Activated CD8-positive, alpha-beta T cell treated with anti-CD3 and anti-CD28 coated beads for 36 hours (primary cell): ENCODE measurements at regions of chr1 and their contacts with region 1.

Region 1: GRCh38 chr1:7948960-7949359 is 8.3 kb upstream of the TNFRSF9 start:
- DNase-seq: peak; percentile 61
- ATAC-seq: peak; percentile 75
- H3K4me3 Mint-ChIP-seq: peak overlapping the region; percentile 51
- H3K27ac Mint-ChIP-seq: peak overlapping the region; percentile 90
- H3K4me1 Mint-ChIP-seq: peaks cover 54% of the 10 kb centered on the region
- H3K27me3 Mint-ChIP-seq: no peaks in the 10 kb centered on the region
- CTCF ChIP-seq: no peak

Region 2: GRCh38 chr1:7893529-7894180 is 55.3 kb before region 1 on chr1:
- CTCF ChIA-PET with region 1: no interaction called
- POLR2A ChIA-PET with region 1: no interaction called
- intact Hi-C with region 1: no loop called
- DNase-seq: no peak
- ATAC-seq: no peak
- H3K4me3 Mint-ChIP-seq: no peak overlapping the region
- H3K27ac Mint-ChIP-seq: no peak overlapping the region
- H3K4me1 Mint-ChIP-seq: peaks cover 3% of the 10 kb centered on the region
- H3K27me3 Mint-ChIP-seq: no peaks in the 10 kb centered on the region
- CTCF ChIP-seq: no peak

Region 3: DNA sequence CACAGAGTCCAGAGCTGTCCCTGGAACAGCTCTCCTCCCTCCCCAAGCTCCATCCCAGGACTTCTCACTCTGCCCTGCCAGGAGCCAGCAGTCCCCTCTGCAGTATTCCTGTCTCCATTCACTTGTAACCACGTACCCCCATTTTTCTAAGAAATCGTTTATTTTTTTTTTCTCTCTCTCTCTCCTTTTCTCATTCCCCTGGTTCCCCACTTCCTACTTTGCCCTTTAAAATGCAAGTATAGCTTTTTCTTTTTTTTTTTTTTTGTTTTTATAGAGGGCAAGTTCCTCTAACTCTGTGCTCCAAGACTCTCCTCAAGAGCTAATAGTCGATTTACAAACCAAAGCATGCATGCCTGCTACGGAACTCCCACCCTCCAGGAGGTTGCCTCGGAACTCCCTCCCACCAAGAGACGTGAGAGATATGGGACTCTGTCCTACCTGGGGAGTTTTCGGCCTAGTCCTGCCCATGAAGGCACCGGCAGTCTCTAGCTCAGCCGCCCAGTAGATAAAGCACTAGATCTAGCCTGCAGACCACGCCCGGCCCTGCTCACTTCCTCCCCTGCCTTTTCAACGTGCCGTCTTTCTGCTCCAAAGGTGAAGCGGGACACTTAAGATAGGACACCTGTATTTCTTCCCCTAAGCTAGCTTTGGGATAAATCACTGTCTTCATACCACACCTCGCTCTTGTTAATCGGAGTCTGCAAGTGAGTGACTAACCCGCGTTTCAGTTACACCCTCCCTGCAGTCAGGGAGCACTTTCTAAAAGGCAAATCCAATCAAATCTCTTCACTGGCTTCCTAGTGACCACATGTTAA is 36.0 kb before region 1 on chr1:
- CTCF ChIA-PET with region 1: interaction called, 6 read pairs
- POLR2A ChIA-PET with region 1: interaction called, 65 read pairs
- intact Hi-C with region 1: loop called (anchors 5 kb)
- DNase-seq: no peak
- ATAC-seq: peak; percentile 17
- H3K4me3 Mint-ChIP-seq: peak overlapping the region; percentile 56
- H3K27ac Mint-ChIP-seq: peak overlapping the region; percentile 66
- H3K4me1 Mint-ChIP-seq: peaks cover 42% of the 10 kb centered on the region
- H3K27me3 Mint-ChIP-seq: no peaks in the 10 kb centered on the region
- CTCF ChIP-seq: no peak

Region 4: DNA sequence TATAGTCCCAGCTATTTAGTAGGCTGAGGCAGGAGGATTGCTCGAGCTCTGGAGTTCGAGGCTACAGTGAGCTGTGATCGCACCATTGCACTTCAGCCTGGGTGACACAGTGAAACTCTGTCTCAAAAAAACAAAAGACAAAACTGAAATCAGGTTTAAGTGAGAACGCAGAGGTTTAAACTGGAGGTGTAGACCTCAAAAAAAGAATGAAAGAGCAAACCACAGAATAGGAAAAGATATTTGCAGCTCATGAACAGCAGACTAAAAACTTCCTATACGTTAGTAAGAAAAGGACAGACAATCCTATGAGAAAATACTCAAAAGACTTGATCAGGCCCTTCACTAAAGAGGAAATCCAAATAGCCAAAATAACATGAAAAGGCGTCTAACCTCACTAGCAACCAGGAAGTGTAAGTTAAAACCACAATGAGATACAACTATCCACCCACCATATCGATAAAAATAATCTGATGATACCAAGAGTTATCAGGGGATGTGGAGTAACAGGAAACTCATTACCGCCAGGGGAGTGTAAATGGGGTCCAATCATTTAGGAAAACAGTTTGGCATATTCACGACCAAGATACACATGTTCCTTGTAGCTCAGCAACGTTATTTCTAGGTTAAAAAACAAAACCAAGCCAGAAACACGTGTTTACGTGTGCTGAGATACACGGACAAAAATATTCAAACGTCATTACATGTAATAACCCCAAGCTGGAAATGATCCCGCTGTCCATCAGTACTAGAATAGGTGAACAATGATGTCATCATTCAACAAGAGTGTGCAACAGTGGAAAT is 18.1 kb before region 1 on chr1:
- CTCF ChIA-PET with region 1: interaction called, 5 read pairs
- POLR2A ChIA-PET with region 1: interaction called, 65 read pairs
- intact Hi-C with region 1: no loop called
- DNase-seq: peak; percentile 57
- ATAC-seq: peak; percentile 73
- H3K4me3 Mint-ChIP-seq: peak overlapping the region; percentile 55
- H3K27ac Mint-ChIP-seq: peak overlapping the region; percentile 93
- H3K4me1 Mint-ChIP-seq: peaks cover 79% of the 10 kb centered on the region
- H3K27me3 Mint-ChIP-seq: no peaks in the 10 kb centered on the region
- CTCF ChIP-seq: no peak

Region 5: DNA sequence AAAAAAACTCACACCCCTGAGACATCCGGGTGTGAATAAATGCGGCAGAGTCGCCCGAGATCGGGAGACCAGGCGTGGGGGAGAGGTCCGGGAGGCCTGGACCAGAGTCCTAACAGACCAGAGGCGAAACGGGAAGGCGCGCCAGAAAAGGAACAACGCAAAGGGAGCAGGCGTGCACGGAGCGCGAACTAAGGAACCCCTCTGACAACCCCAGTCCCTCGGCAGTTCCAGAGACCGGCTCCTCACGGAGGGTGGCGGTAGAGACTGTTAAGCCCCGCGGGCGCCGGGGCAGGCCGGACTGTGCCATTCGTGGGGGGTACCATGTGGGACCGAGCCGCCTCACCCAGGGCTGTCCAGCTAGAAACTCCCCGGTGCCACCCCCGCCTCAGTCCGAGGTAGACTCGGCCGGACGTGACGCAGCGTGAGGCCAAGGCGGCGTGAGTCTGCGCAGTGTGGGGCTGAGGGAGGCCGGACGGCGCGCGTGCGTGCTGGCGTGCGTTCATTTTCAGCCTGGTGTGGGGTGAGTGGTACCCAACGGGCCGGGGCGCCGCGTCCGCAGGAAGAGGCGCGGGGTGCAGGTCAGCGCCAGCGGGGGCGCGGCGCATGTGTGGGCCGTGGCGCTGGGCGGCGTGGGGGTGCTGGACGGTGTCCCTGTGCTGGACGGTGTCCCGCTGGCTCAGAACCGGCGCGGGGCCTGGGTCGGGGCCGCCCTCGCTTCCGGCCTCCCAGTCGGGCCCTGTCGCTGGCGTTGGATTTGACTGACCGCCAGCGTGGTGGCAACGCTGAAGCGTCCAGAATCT is 12.5 kb after region 1 on chr1 and contains the start of gene PARK7:
- CTCF ChIA-PET with region 1: interaction called, 4 read pairs
- POLR2A ChIA-PET with region 1: interaction called, 39 read pairs
- intact Hi-C with region 1: no loop called
- DNase-seq: peak; percentile 100
- ATAC-seq: peak; percentile 96
- H3K4me3 Mint-ChIP-seq: peak within 1 kb of the TSS; percentile 98
- H3K27ac Mint-ChIP-seq: peak within 1 kb of the TSS; percentile 99
- H3K4me1 Mint-ChIP-seq: peaks cover 60% of the 10 kb centered on the region
- H3K27me3 Mint-ChIP-seq: no peaks in the 10 kb centered on the region
- CTCF ChIP-seq: peak; percentile 22
- total RNA-seq, gene PARK7: 539 to 552 TPM

Region 6: DNA sequence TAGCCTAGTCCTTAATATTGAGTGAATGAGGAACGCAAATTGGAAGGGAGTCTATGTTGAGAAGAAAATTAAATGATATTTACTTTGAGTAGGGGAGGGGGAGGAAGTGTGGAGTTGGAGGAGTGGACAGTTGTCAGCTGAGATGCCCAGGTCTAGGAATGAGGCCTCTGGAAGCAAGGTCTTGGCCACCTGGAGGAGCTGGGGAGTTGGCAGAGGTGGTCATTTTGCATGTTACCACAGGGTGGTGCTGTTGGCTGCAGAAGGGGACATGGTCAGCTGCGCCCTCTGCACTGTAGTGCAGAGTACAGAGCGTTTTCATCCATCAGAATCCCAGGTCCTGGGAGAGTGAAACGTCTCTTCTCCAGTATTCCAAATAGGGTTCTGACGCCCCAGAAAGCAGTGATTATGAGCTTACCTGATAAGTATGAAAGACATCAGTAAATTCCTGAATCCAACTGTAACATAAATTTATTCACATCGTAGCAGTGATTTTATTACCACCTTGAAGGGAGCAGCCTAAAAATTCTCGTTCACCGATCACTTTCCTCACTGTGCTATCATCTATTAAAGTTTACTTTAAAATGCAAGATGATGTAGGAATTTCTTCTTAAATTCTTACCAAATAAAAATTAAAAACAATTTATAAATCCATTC is 26.4 kb after region 1 on chr1:
- CTCF ChIA-PET with region 1: interaction called, 12 read pairs
- POLR2A ChIA-PET with region 1: no interaction called
- intact Hi-C with region 1: no loop called
- DNase-seq: peak; percentile 59
- ATAC-seq: peak; percentile 95
- H3K4me3 Mint-ChIP-seq: no peak overlapping the region
- H3K27ac Mint-ChIP-seq: peak overlapping the region; percentile 35
- H3K4me1 Mint-ChIP-seq: peaks cover 16% of the 10 kb centered on the region
- H3K27me3 Mint-ChIP-seq: no peaks in the 10 kb centered on the region
- CTCF ChIP-seq: peak; percentile 77